ENCODE measurements at regions of chr3 and their contacts with region 1.

Region 1: GRCh38 chr3:52471371-52472238 is 16.2 kb downstream of the NISCH start:
- DNase-seq: peak; percentile 67
- H3K4me3 Mint-ChIP-seq: no peak overlapping the region
- H3K27ac Mint-ChIP-seq: no peak overlapping the region
- H3K4me1 Mint-ChIP-seq: no peaks in the 10 kb centered on the region
- H3K27me3 Mint-ChIP-seq: no peaks in the 10 kb centered on the region
- CTCF ChIP-seq: peak; percentile 69

Region 2: DNA sequence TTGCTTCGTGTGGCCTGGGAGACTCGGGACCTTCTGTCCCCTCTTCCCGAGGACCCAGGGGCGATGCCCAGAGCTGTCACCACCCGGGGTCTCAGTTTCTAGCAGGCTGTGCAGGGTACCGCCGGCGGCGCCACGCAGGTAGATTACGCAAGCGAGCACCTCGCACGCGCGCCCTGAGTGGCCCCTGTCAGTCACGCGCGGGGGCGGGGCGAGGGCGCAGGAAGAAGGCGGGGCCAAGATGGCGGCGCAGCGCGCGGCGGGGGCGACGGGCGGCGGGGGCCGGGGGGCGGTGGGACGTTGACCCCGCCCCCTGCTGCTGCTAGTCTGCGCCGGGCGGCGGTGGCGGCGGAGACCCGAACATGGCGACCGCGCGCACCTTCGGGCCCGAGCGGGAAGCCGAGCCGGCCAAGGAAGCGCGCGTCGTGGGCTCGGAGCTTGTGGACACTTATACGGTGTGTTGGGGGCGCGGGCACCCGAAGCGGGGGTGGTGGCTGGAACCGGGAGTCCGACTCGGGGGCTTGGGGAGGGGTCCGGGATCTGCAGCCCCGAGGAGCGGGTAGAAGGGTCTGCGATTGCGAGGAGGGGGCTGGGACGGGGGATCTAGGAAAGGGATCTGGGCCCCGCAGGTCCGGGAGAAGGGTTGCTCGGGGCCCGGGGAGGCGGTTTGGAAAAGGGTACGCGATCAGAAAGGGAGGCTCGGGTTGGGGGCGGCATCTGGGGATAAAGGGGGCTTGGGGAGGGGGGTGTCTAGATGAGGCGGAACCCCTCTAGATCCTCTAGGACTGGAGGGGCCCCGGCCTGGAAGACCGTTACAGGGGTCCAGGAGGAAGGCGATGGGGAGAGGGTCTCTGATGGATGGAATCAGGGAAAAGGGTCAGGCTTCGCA is 16.1 kb before region 1 on chr3 and contains the start of gene NISCH:
- CTCF ChIA-PET with region 1: interaction called, 10 read pairs
- POLR2A ChIA-PET with region 1: interaction called, 8 read pairs
- intact Hi-C with region 1: no loop called
- DNase-seq: peak; percentile 83
- H3K4me3 Mint-ChIP-seq: peak within 1 kb of the TSS; percentile 92
- H3K27ac Mint-ChIP-seq: peak within 1 kb of the TSS; percentile 95
- H3K4me1 Mint-ChIP-seq: peaks cover 26% of the 10 kb centered on the region
- H3K27me3 Mint-ChIP-seq: no peaks in the 10 kb centered on the region
- CTCF ChIP-seq: no peak
- total RNA-seq, gene NISCH: 60.5 and 69.7 TPM in 2 replicates

Region 3: DNA sequence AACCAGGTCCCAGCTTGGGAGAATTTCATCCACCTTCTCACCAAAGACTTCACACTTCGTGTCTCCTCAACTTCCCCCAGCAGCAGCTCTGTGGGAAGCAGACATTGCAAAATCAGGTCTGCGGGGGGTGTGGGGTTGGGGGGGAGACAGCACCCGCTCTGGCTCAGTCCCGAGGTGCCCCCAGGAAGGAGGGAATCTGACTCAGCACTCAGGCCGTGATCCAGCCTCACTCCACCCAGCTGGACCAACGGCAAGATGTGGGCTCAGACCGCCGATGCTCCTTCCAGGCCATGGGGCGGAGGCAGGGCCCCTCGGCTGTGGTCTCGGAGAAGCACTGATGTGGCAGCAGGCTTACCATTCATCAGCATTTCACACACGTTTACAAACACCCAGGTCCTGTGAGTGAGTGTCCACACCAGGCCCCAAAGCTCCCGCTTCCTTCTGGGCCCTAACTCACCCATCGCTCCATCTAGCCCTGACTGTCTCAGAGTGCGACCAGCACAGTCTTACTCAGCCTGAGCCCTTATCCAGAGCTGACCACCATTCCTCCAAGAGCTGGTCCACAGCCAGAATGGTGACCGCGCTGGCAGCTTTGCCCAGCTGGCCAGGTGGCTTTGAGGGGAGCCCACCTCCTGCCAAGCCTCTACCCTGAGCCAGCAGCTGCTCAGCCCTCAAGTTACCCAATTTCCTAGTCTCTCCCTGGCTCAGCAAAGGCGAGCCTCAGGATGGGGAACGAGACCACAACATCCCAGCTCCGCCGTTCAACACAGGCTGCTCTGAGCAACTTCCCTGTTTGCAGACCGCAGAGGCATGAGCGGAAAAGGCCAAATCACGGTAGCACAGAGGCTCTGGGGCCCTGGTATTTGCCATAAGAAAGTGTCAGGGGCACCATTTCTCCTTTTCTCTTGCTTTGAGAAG is 26.8 kb after region 1 on chr3:
- CTCF ChIA-PET with region 1: no interaction called
- POLR2A ChIA-PET with region 1: no interaction called
- intact Hi-C with region 1: loop called (anchors 1 kb)
- DNase-seq: no peak
- H3K4me3 Mint-ChIP-seq: no peak overlapping the region
- H3K27ac Mint-ChIP-seq: no peak overlapping the region
- H3K4me1 Mint-ChIP-seq: no peaks in the 10 kb centered on the region
- H3K27me3 Mint-ChIP-seq: no peaks in the 10 kb centered on the region
- CTCF ChIP-seq: no peak

Region 4: GRCh38 chr3:52536369-52537164 is 65.0 kb after region 1 on chr3 and contains the start of gene UQCC5:
- CTCF ChIA-PET with region 1: no interaction called
- POLR2A ChIA-PET with region 1: interaction called, 3 read pairs
- intact Hi-C with region 1: loop called (anchors 10 kb)
- DNase-seq: peak; percentile 98
- H3K4me3 Mint-ChIP-seq: peak within 1 kb of the TSS; percentile 84
- H3K27ac Mint-ChIP-seq: peak within 1 kb of the TSS; percentile 96
- H3K4me1 Mint-ChIP-seq: peaks cover 30% of the 10 kb centered on the region
- H3K27me3 Mint-ChIP-seq: no peaks in the 10 kb centered on the region
- CTCF ChIP-seq: no peak
- total RNA-seq, gene UQCC5: 22.6 and 25.9 TPM in 2 replicates

Measured in MCF 10A (cell line).